Right ventricle myocardium inferior (tissue), 1 donor: ENCODE measurements at regions of chr12 and their contacts with region 1.

Region 1: GRCh38 chr12:125129591-125130255 is 64.5 kb downstream of the AACS start:
- DNase-seq: no peak
- ATAC-seq: peak; percentile 76

Region 2: DNA sequence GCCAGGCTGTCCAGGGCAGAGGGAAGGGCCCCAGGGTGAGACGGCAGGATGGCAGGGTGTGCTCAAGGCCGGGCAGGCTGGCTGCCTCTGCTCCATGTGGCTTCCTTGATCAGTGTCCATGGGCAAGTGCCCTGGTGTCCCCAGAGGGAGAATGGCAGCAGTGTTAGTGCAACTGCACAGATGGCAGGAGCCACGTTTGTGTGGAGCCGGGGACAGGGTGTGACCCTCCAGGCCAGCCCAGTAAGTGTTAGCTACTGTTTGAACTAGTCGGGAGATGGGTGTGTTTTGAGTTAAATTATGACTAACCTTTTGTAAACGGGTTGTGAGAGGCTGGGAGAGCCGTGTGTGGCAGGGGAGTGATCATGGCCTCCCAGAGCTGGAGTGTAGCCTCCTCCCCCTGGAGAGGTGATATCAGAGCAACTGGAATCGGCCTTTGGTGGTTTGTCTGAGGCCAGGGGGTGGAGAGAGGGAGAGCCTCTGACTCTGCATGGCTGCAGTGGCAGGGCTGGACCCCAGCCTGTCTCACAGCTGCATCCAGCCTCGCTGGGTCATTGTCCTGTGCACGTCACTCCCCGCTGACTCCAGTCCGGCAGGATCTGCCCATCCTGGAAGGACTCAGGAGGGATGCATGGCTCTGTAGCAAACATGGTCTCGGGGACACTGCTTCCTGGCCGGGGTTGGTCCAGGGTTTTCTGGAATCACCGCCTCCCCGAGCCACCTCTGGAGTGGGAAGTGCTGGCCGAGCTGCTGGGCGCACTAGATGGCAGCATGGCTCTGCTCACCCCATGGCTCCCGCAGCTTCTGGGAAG is 36.6 kb before region 1 on chr12:
- intact Hi-C with region 1: no loop called
- DNase-seq: no peak
- ATAC-seq: peak; percentile 83

Region 3: DNA sequence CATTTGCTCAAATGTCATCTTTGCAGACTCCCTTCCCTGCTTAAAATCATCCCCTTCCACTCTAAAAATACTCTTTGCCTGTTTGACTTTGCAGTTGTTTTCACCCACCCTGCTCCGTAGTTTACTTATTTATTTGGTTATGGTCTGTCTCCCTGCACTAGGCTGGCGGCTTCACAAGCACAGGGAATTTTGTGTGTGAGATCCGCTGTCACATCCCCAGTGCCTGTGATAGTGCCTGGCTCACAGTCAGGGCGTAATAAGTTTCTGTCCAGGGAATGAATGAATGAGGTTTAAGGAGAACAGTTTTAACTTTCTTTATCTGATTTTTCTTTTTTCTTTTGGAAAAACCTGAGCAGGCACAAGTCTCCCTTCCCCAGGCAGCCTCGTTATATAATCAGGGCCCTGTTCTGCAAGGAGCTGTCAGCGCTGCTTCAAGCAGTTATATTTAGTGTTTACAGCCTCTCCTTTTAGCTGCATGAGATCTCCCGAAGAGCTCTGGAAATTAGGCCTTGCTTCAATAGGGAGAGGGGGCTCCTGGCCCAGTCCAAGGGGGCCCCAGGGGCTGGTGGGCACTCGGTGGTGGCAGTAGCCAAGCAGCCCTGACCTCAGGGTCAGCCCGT is 42.6 kb after region 1 on chr12:
- intact Hi-C with region 1: loop called (anchors 2 kb)
- DNase-seq: no peak
- ATAC-seq: peak; percentile 51